ENCODE measurements at regions of chr7 and their contacts with region 1.

Region 1: DNA sequence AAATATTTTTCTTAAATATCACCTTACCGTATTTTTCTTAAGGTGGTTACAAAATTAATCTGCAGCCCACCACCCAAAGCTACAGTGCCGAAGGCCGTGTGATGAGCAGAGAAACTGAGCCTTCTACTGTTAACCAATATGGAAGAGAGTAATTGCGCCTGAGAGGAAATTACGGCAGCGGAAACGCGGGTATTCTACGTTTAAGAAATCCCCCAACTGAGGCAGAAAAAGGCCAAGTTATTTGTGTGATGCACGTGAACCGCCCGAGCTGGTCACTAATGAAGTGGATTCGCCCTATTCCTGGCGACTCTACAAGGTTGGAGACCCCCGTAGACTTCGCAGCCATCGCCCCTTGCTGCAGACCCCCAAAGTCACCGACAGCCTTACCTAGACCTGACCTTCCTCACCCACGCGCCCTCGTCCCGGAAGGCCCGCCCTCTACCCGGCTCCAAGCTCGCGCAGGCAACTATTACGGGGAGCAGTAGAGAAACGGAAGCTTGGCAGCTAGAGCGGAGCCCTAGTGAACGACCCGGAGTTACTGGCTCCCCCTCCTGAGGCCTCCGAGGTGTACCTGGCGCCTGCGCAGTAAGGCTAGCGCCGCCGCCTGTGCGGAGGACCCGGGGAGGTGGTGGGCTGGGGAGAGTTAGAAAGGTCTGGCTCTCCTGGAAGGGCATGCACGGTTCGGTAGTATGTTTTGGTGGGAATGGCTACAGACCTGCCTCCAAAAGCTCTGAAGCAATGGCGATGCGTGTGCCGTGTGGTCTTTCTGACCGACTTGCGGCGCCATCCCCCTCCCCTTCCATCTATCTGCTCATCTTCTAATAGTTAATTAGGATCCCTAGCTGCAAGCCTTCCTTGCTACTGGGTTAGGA is at the start of gene MRPS33:
- DNase-seq: peak; percentile 96
- H3K4me3 ChIP-seq: peak within 1 kb of the TSS; percentile 72 to 96
- H3K27ac ChIP-seq: peak within 1 kb of the TSS; percentile 78 to 93
- H3K4me1 ChIP-seq: peaks cover 6 to 16% of the 10 kb centered on the region in 2 experiments; a peak in 3 of 4 replicates
- H3K27me3 ChIP-seq: no peaks in the 10 kb centered on the region
- CTCF ChIP-seq: peak; percentile 86
- EP300 ChIP-seq: no peak; a peak in 2 of 4 replicates
- RAD21 ChIP-seq: no peak; the same call in 1 of the 2 replicates
- polyA plus RNA-seq, gene MRPS33: 88.8 and 95.5 TPM in 2 replicates

Region 2: GRCh38 chr7:140358412-140359051 is 656.2 kb before region 1 on chr7:
- CTCF ChIA-PET with region 1: no interaction called
- POLR2A ChIA-PET with region 1: no interaction called
- DNase-seq: no peak
- H3K4me3 ChIP-seq: no peak overlapping the region
- H3K27ac ChIP-seq: no peak overlapping the region
- H3K4me1 ChIP-seq: no peaks in the 10 kb centered on the region
- H3K27me3 ChIP-seq: no peaks in the 10 kb centered on the region
- CTCF ChIP-seq: no peak
- EP300 ChIP-seq: no peak
- RAD21 ChIP-seq: no peak

Region 3: DNA sequence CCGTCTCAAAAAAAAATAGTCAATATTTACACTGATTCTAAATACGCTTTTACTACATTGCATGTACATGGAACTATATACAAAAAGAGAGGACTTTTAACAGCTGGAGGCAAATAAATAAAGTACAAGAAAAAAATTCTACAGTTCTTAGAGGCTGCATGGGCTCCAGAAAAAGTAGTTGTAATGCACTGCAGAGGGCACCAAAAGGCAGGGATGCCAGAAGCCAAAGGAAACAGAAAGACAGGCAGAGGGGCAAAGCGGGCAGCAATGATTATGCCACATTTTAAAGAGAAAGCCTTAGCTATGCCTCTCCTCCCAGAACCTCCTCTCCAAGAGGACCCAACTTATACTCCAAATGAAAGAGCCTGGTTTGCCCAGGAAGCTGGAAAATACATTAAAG is 353.6 kb before region 1 on chr7:
- CTCF ChIA-PET with region 1: interaction called, 22 read pairs
- POLR2A ChIA-PET with region 1: no interaction called
- DNase-seq: no peak
- H3K4me3 ChIP-seq: no peak overlapping the region
- H3K27ac ChIP-seq: no peak overlapping the region
- H3K4me1 ChIP-seq: no peaks in the 10 kb centered on the region
- H3K27me3 ChIP-seq: peaks cover 9% of the 10 kb centered on the region; the same call in 1 of the 2 replicates
- CTCF ChIP-seq: peak; percentile 47
- EP300 ChIP-seq: no peak
- RAD21 ChIP-seq: peak; percentile 68

Region 4: DNA sequence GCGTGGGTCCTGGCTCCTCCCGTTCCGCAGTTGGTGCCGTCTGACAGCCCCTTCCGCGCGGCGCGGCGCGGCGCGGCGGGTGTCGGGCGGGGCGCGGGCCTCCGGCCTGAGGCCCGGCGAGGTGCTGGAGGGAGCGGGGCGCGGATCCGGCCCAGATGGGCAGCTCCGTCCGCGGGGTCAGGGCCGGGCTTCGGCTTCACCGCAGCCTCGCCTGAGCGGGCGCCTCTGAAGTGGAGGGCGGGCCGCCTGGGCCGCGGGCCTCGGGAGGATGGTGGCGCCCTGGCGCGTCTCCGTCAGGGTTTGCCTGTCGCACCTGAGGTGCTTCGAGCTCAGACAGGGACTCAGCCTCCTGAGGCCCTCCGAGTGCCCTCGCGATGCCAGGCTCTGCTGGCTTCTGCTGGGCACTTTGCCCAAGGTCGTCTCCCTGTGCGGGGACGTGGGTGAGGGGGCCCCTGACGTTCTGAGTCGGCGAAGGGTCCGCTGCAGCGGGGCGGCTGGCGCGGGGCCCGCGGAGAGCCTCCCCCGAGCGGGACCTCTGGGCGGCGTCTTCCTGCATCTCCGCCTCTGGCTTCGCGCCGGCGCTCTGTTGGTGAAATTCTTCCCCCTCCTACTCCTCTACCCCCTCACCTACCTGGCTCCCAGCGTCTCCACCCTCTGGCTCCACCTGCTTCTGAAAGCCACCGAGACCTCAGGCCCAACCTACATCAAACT is 341.5 kb before region 1 on chr7:
- CTCF ChIA-PET with region 1: interaction called, 45 read pairs
- POLR2A ChIA-PET with region 1: interaction called, 5 read pairs
- DNase-seq: peak; percentile 89
- H3K4me3 ChIP-seq: peak overlapping the region; percentile 64 to 74
- H3K27ac ChIP-seq: 0 out of 4 replicates have a peak overlapping the region, but pooled peaks of 1 of the 2 experiments have one; percentile 18
- H3K4me1 ChIP-seq: peaks cover 7 to 20% of the 10 kb centered on the region in 2 experiments; a peak in 2 of 4 replicates
- H3K27me3 ChIP-seq: no peaks in the 10 kb centered on the region
- CTCF ChIP-seq: no peak
- EP300 ChIP-seq: no peak
- RAD21 ChIP-seq: no peak

Region 5: DNA sequence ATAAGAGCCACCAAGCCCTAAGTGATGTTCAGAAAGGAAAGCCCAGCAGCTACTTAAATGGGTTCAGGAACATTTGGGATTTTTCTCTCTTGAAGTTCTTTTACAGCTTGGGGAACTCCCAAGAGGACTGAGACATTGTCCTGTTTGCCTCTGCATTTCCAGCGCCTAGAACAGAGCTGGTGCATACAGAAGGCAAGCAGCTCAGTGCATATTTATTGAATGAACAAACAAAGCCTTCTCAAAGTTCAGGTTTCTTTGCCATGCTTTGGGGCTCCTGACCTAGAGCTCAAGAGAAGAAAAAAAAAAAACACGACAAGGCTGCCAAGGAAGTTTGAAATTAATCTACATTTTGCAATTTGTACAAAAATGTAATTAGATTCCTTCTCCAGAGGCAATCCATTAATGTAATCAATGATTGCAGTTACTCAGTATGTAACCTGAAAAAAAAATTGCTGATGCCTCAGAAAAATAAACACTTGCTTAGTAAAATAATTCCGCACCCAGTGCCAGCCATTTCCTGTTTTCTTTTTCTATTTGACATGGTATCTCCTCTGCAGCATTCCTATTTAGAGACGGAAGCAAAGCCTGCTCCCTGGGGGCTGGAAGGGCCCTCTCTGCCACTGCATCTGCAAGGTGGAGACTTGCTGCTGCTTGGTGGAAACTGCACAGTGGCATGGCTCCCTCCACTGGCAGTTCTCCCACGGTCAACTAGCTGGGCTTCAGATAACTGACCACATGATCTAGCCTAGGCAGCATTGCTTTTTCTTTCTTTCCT is 216.4 kb after region 1 on chr7:
- CTCF ChIA-PET with region 1: interaction called, 15 read pairs
- POLR2A ChIA-PET with region 1: interaction called, 5 read pairs
- DNase-seq: peak; percentile 72
- H3K4me3 ChIP-seq: no peak overlapping the region
- H3K27ac ChIP-seq: no peak overlapping the region
- H3K4me1 ChIP-seq: peaks cover 0 to 6% of the 10 kb centered on the region in 2 experiments; a peak in 2 of 4 replicates
- H3K27me3 ChIP-seq: no peaks in the 10 kb centered on the region
- CTCF ChIP-seq: no peak
- EP300 ChIP-seq: no peak
- RAD21 ChIP-seq: peak; percentile 86

Region 6: DNA sequence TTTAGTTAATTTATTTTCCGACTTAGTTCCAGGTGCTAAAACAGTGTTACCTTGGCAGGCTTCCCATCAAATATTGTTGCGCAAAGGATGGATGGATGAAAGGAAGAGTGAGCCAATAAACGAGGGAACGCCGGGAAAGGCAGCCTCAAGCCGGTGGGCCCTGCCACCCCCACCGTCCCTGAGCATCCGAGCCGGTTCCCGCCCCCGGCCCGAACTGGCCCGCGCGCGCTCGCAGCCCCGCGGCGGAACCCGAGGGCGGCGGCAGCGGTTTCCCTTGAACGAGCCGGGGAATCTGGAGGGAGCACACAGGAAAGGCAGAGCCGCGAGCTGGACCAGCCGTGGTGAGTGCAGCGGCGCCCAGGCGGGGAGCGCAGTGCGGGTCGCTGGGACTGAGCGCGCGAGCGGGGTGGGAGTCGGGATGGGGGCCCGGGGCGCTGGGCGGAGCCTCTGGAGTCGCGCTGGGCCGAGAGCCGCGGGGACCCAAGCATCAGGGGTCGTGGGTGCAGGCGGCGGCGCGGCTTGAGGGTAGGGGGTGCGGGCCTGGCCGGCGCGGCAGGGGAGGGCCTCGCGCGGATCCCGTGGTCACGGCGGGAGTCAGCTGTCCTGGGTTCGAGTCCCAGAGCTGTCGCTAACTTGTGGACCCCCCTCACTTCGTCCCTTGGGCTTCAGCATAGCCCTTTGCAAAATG is 536.5 kb after region 1 on chr7 and contains the start of gene AGK:
- CTCF ChIA-PET with region 1: no interaction called
- POLR2A ChIA-PET with region 1: interaction called, 15 read pairs
- DNase-seq: peak; percentile 98
- H3K4me3 ChIP-seq: peak within 1 kb of the TSS; percentile 76 to 84
- H3K27ac ChIP-seq: peak within 1 kb of the TSS; percentile 25 to 84; a peak in 3 of 4 replicates
- H3K4me1 ChIP-seq: peaks cover 0 to 16% of the 10 kb centered on the region in 2 experiments; a peak in 3 of 4 replicates
- H3K27me3 ChIP-seq: no peaks in the 10 kb centered on the region
- CTCF ChIP-seq: no peak
- EP300 ChIP-seq: peak in 1 of 2 experiments; percentile 42; a peak in 1 of 4 replicates
- RAD21 ChIP-seq: no peak
- polyA plus RNA-seq, gene AGK: 45.7 and 67.0 TPM in 2 replicates